ENCODE measurements at regions of chr7 and their contacts with region 1.

Region 1: GRCh38 chr7:140175221-140176121 is 1.3 kb downstream of the KDM7A start:
- DNase-seq: peak; percentile 85 to 97
- ATAC-seq: peak; percentile 67 to 82 (median 68)
- H3K4me3 ChIP-seq: peak overlapping the region; percentile 41
- H3K4me3 Mint-ChIP-seq: peak overlapping the region; percentile 89
- H3K27ac ChIP-seq: peak overlapping the region; percentile 93
- H3K27ac Mint-ChIP-seq: peak overlapping the region; percentile 92 to 94
- H3K4me1 ChIP-seq: peaks cover 18% of the 10 kb centered on the region
- H3K4me1 Mint-ChIP-seq: peaks cover 31 to 41% of the 10 kb centered on the region in 2 donors
- H3K27me3 ChIP-seq: no peaks in the 10 kb centered on the region
- H3K27me3 Mint-ChIP-seq: peaks cover 0 to 3% of the 10 kb centered on the region in 2 donors
- CTCF ChIP-seq: peak; percentile 68

Region 2: DNA sequence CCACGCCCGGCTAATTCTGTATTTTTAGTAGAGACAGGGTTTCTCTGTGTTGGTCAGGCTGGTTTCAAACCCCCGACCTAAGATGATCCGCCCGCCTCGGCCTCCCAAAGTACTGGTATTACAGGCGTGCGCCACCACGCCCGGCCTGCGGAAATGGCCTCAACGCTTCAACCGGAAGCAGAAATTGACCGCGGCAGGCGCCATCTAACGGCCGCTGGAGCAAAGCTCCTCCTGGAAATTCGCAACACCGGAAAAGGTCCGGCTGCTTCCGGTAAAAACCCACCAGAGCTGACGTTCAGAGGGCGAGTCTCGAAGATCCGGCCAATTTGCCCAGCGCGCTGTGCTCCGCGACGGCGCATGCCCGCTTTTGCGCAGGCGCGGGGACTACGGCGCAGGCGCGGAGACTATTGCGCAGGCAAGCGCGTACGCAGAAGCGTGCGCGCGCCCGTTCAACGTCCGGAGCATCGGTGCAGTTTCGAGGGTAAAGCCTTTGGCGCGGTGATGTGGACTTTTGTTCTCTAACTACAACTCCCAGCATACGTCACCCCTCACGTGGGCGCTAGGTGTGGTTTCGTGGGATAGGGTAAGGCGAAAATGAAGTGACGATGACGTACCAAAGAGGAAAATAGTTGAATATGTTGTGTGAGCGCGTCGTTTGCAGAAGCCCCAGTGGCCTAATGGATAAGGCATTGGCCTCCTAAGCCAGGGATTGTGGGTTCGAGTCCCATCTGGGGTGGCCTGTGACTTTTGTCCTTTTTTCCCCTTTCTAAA is 835.2 kb before region 1 on chr7:
- intact Hi-C with region 1: loop called (anchors 2 kb)
- DNase-seq: peak; percentile 94 to 100
- ATAC-seq: peak; percentile 73 to 91 (median 81)
- H3K4me3 ChIP-seq: peak overlapping the region; percentile 89
- H3K4me3 Mint-ChIP-seq: peak overlapping the region; percentile 98
- H3K27ac ChIP-seq: peak overlapping the region; percentile 98
- H3K27ac Mint-ChIP-seq: peak overlapping the region; percentile 100
- H3K4me1 ChIP-seq: peaks cover 15% of the 10 kb centered on the region
- H3K4me1 Mint-ChIP-seq: peaks cover 28 to 31% of the 10 kb centered on the region in 2 donors
- H3K27me3 ChIP-seq: no peaks in the 10 kb centered on the region
- H3K27me3 Mint-ChIP-seq: peaks cover 4 to 8% of the 10 kb centered on the region in 2 donors
- CTCF ChIP-seq: no peak

Region 3: GRCh38 chr7:139635526-139636302 is 539.8 kb before region 1 on chr7:
- intact Hi-C with region 1: no loop called
- DNase-seq: peak; percentile 78 to 85
- ATAC-seq: peak; percentile 93 to 96 (median 94)
- H3K4me3 ChIP-seq: no peak overlapping the region
- H3K4me3 Mint-ChIP-seq: peak overlapping the region; percentile 79
- H3K27ac ChIP-seq: peak overlapping the region; percentile 88
- H3K27ac Mint-ChIP-seq: peak overlapping the region; percentile 91 to 96
- H3K4me1 ChIP-seq: peaks cover 28% of the 10 kb centered on the region
- H3K4me1 Mint-ChIP-seq: peaks cover 45 to 58% of the 10 kb centered on the region in 2 donors
- H3K27me3 ChIP-seq: no peaks in the 10 kb centered on the region
- H3K27me3 Mint-ChIP-seq: no peaks in the 10 kb centered on the region
- CTCF ChIP-seq: no peak

Region 4: GRCh38 chr7:139645572-139646523 is 529.6 kb before region 1 on chr7:
- intact Hi-C with region 1: loop called (anchors 5 kb)
- DNase-seq: peak; percentile 83 to 93
- ATAC-seq: peak; percentile 33 to 57 (median 42)
- H3K4me3 ChIP-seq: no peak overlapping the region
- H3K4me3 Mint-ChIP-seq: peak overlapping the region; percentile 42
- H3K27ac ChIP-seq: no peak overlapping the region
- H3K27ac Mint-ChIP-seq: peak overlapping the region; percentile 94 to 97
- H3K4me1 ChIP-seq: peaks cover 44% of the 10 kb centered on the region
- H3K4me1 Mint-ChIP-seq: peaks cover 75 to 77% of the 10 kb centered on the region in 2 donors
- H3K27me3 ChIP-seq: no peaks in the 10 kb centered on the region
- H3K27me3 Mint-ChIP-seq: no peaks in the 10 kb centered on the region
- CTCF ChIP-seq: peak; percentile 88

Region 5: DNA sequence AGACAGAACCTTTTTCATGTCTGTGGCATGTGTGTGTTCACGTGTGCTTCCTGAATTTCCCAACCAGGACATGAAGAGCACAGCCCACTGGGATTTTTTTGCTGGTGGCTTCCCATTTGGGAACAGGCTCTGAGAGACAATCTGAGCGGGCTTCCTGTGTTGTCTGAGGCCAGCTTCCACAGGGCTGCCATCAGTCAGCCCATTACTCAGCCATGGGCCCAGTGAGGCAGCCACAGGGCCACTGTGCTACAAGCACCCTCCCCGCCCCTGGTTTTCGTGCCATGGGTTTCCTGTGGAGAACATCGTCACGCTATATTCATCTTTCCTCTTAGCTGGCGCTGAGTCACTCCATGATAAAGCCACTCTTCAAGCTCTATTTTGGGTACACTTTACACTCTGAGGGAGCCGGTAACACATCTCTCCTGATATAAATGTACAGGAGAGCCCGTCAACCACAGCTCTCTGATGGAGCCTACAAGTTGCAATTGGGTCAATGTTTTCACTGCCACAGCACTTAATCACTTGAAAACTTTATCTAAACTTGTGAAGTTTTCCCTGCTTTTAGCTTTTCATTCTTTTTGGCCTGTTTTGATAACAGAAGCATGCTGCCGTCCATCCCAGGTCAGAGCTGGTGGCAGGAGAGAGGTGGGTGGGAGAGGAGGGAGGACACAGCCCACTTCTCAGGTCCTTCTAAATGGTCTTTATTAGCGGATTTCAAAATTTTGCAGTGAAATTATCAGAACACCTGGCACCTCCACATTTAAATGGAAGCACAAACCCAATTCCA is 494.6 kb before region 1 on chr7:
- intact Hi-C with region 1: no loop called
- DNase-seq: peak; percentile 49 to 59
- ATAC-seq: peak; percentile 88 to 91 (median 89)
- H3K4me3 ChIP-seq: no peak overlapping the region
- H3K4me3 Mint-ChIP-seq: peak overlapping the region; percentile 71
- H3K27ac ChIP-seq: peak overlapping the region; percentile 54
- H3K27ac Mint-ChIP-seq: peak overlapping the region; percentile 88 to 94
- H3K4me1 ChIP-seq: peaks cover 39% of the 10 kb centered on the region
- H3K4me1 Mint-ChIP-seq: peaks cover 63 to 80% of the 10 kb centered on the region in 2 donors
- H3K27me3 ChIP-seq: no peaks in the 10 kb centered on the region
- H3K27me3 Mint-ChIP-seq: no peaks in the 10 kb centered on the region
- CTCF ChIP-seq: no peak

Region 6: DNA sequence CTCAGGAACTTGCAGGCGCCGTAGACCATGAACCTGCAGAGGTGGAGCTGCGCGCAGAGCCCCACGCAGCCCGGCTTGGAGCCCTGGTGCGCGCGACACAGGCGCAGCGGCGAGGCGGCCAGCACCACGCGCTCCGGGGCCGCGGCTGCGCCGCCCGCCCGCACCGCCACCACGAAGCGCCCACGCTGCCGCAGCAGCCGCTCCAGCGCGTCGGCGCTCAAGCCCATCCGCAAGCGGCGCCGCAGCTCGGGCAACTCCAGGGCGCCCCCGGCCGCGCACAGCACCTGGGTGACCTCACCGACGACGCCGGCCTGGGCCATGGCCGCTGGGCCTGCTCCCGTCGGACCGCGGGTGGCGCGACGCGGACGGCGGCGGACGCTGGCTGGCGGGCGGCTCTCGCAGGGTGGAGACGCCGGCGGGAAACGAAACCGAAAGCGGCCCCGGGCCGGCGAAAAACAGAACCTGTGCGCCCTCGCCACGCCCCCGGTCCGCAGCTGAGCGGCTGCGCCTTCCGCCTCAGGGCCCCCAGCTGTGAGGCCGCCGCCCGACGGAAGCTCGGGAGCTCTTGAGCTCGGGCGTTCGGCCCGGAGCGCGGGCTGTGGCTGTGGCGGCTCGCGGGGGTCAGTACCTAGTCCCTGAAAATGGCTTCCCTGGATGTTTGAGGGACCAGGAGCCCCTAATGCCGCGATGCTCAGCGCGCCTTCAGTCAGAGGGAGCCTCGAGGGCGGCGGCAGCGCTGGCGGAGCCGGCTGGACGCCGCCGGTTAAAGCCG is 112.8 kb before region 1 on chr7 and contains the start of gene PARP12:
- intact Hi-C with region 1: loop called (anchors 1 kb)
- DNase-seq: peak; percentile 90 to 94
- ATAC-seq: peak; percentile 85 to 95 (median 88)
- H3K4me3 ChIP-seq: peak within 1 kb of the TSS; percentile 79
- H3K4me3 Mint-ChIP-seq: peak within 1 kb of the TSS; percentile 86
- H3K27ac ChIP-seq: peak within 1 kb of the TSS; percentile 95
- H3K27ac Mint-ChIP-seq: peak within 1 kb of the TSS; percentile 80 to 86
- H3K4me1 ChIP-seq: peaks cover 36% of the 10 kb centered on the region
- H3K4me1 Mint-ChIP-seq: peaks cover 32 to 43% of the 10 kb centered on the region in 2 donors
- H3K27me3 ChIP-seq: no peaks in the 10 kb centered on the region
- H3K27me3 Mint-ChIP-seq: no peaks in the 10 kb centered on the region
- CTCF ChIP-seq: no peak
- total RNA-seq, gene PARP12: 116 to 151 (median 130) TPM

Region 7: DNA sequence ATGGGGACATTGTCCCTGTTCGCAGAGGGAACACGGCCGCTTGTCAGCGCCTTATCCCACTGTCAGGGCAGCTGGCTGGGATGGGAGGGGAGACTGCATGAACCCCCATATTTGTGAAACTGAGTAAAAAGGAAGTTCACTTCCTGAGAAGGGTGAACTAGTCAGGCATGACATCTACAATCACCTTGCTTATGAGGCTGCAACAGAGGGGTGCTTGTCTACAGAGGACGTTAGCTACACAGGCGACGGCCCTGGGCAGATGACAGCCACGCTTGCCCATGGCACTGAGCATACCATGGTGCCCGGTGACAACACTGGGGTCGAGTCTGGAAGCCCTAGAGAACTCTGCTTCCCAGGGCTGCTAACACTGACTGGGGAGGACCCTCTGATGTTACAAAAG is 47.3 kb after region 1 on chr7:
- intact Hi-C with region 1: no loop called
- DNase-seq: no peak
- ATAC-seq: no peak
- H3K4me3 ChIP-seq: no peak overlapping the region
- H3K4me3 Mint-ChIP-seq: no peak overlapping the region
- H3K27ac ChIP-seq: no peak overlapping the region
- H3K27ac Mint-ChIP-seq: no peak overlapping the region
- H3K4me1 ChIP-seq: peaks cover 18% of the 10 kb centered on the region
- H3K4me1 Mint-ChIP-seq: peaks cover 16 to 20% of the 10 kb centered on the region in 2 donors
- H3K27me3 ChIP-seq: no peaks in the 10 kb centered on the region
- H3K27me3 Mint-ChIP-seq: no peaks in the 10 kb centered on the region
- CTCF ChIP-seq: no peak

Region 8: GRCh38 chr7:140249036-140249806 is 73.8 kb after region 1 on chr7:
- intact Hi-C with region 1: loop called (anchors 1 kb)
- DNase-seq: no peak
- ATAC-seq: no peak
- H3K4me3 ChIP-seq: no peak overlapping the region
- H3K4me3 Mint-ChIP-seq: no peak overlapping the region
- H3K27ac ChIP-seq: no peak overlapping the region
- H3K27ac Mint-ChIP-seq: no peak overlapping the region
- H3K4me1 ChIP-seq: peaks cover 22% of the 10 kb centered on the region
- H3K4me1 Mint-ChIP-seq: peaks cover 23 to 24% of the 10 kb centered on the region in 2 donors
- H3K27me3 ChIP-seq: no peaks in the 10 kb centered on the region
- H3K27me3 Mint-ChIP-seq: peaks cover 0 to 3% of the 10 kb centered on the region in 2 donors
- CTCF ChIP-seq: no peak

Region 9: GRCh38 chr7:140326116-140326928 is 150.9 kb after region 1 on chr7:
- intact Hi-C with region 1: loop called (anchors 1 kb)
- DNase-seq: peak in 1 of 2 donors; percentile 72
- ATAC-seq: peak; percentile 75 to 87 (median 80)
- H3K4me3 ChIP-seq: no peak overlapping the region
- H3K4me3 Mint-ChIP-seq: no peak overlapping the region
- H3K27ac ChIP-seq: no peak overlapping the region
- H3K27ac Mint-ChIP-seq: no peak overlapping the region
- H3K4me1 ChIP-seq: peaks cover 2% of the 10 kb centered on the region
- H3K4me1 Mint-ChIP-seq: no peaks in the 10 kb centered on the region
- H3K27me3 ChIP-seq: no peaks in the 10 kb centered on the region
- H3K27me3 Mint-ChIP-seq: no peaks in the 10 kb centered on the region
- CTCF ChIP-seq: peak; percentile 31

Region 10: GRCh38 chr7:141014524-141015395 is 839.3 kb after region 1 on chr7 and contains the start of gene MRPS33:
- intact Hi-C with region 1: loop called (anchors 10 kb)
- DNase-seq: peak; percentile 87 to 98
- ATAC-seq: peak; percentile 94 to 99 (median 95)
- H3K4me3 ChIP-seq: peak within 1 kb of the TSS; percentile 68
- H3K4me3 Mint-ChIP-seq: peak within 1 kb of the TSS; percentile 97
- H3K27ac ChIP-seq: peak within 1 kb of the TSS; percentile 96
- H3K27ac Mint-ChIP-seq: peak within 1 kb of the TSS; percentile 99 to 100
- H3K4me1 ChIP-seq: peaks cover 11% of the 10 kb centered on the region
- H3K4me1 Mint-ChIP-seq: peaks cover 42 to 44% of the 10 kb centered on the region in 2 donors
- H3K27me3 ChIP-seq: peaks cover 9% of the 10 kb centered on the region
- H3K27me3 Mint-ChIP-seq: peaks cover 18 to 29% of the 10 kb centered on the region in 2 donors
- CTCF ChIP-seq: peak; percentile 51
- total RNA-seq, gene MRPS33: 12.8 to 14.1 (median 13.7) TPM

Measured in natural killer cell (primary cell).